Body of pancreas (tissue), 4 donors: ENCODE measurements at regions of chr3 and their contacts with region 1.

Region 1: DNA sequence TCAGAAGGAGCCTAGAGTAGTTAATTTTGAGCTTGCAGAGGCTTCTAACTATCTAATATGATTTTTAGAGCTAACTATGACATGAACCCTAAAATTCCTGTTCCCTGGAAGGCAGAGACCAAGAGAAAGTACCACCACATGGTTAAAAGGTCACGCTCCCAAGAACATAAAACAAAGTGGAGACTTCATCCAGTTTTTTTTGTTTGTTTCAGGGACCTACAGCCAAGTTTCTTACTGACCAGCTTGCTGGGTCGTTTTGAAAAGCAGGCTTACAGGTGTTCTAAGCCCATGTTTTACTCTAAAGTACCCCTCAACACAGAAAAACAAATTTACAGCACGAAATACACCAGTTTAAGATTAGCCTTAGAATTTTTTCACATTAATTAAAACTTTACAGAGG is 39.6 kb upstream of the SKIL start:
- DNase-seq: no peak
- ATAC-seq: no peak
- H3K4me3 ChIP-seq: no peak overlapping the region
- H3K27ac ChIP-seq: no peak overlapping the region
- H3K4me1 ChIP-seq: no peaks in the 10 kb centered on the region
- H3K27me3 ChIP-seq: no peaks in the 10 kb centered on the region
- CTCF ChIP-seq: no peak
- POLR2A ChIP-seq: no peak

Region 2: GRCh38 chr3:170368921-170369320 is 51.0 kb after region 1 on chr3:
- intact Hi-C with region 1: loop called (anchors 10 kb)
- DNase-seq: no peak
- ATAC-seq: no peak
- H3K4me3 ChIP-seq: no peak overlapping the region
- H3K27ac ChIP-seq: no peak overlapping the region
- H3K4me1 ChIP-seq: peaks cover 13% of the 10 kb centered on the region
- H3K27me3 ChIP-seq: no peaks in the 10 kb centered on the region
- CTCF ChIP-seq: peak in 4 of 7 experiments; percentile 13 to 42 (median 35)
- POLR2A ChIP-seq: no peak

Region 3: DNA sequence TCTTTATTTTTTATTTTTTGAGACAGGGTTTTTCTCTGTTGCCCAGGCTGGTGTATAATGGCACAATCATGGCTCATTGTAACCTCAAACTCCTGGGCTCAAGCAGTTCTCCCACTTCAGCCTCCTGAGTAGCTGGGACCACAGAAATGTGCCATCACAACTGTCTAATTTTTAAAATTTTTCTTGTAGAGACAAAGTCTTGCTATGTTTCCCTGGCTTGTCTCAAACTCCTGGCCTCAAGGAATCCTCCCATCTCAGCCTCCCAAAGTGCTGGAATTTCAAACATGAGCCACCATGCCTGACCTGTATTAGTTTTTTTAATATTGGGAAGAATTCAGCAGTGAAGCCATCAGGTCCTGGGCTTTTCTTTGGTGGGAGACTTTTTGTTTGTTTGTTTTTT is 87.1 kb after region 1 on chr3:
- intact Hi-C with region 1: loop called (anchors 10 kb)
- DNase-seq: no peak
- ATAC-seq: no peak
- H3K4me3 ChIP-seq: no peak overlapping the region
- H3K27ac ChIP-seq: no peak overlapping the region
- H3K4me1 ChIP-seq: no peaks in the 10 kb centered on the region
- H3K27me3 ChIP-seq: no peaks in the 10 kb centered on the region
- CTCF ChIP-seq: no peak
- POLR2A ChIP-seq: no peak